ENCODE measurements at regions of chr14 and their contacts with region 1.

Region 1: DNA sequence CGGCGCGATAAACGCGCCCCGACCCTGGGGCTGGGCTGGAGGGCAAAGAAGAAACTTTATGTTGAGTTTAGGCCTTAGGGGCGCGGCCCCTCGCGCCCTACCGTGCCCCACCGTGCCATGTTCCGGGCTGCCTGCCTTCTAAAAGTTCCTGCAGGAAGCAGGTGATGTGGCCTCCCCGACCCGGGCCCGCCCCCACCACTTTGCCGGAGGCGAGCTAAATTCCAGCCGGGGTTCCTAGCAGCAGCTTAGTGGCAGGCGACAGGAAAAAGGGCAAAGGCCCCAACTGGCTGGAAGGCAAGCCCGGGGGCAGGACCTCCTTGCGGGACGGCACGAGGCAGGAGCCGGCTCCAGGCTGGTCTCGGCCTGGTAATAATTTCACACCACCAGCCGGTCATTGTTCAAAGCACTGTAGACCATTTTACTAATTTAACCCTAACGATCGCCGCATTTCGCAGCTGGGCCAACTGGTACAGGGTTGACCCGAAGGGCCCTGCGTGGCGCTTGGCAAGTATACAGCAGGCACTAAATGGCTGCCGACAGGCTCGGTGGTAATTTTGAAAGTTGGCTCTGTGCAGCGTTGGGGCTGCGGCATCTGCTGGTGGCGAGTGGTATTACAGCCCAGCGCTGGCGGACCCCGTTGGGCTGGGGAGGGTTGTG is 895 bp upstream of the CCDC88C start:
- DNase-seq: peak; percentile 41 to 75 (median 42)
- ATAC-seq: peak; percentile 67
- H3K4me3 ChIP-seq: peak overlapping the region; percentile 76
- H3K27ac ChIP-seq: peak overlapping the region; percentile 82
- H3K4me1 ChIP-seq: peaks cover 18 to 27% of the 10 kb centered on the region in 2 experiments; a peak in 4 of 5 replicates
- H3K27me3 ChIP-seq: no peaks in the 10 kb centered on the region
- CTCF ChIP-seq: peak; percentile 76 to 89 (median 82)
- EP300 ChIP-seq: no peak
- POLR2A ChIP-seq: no peak; the same call in 1 of the 2 replicates
- RAD21 ChIP-seq: peak; percentile 75 to 83

Region 2: GRCh38 chr14:91323671-91324605 is 94.6 kb before region 1 on chr14:
- CTCF ChIA-PET with region 1: interaction called, 8 read pairs
- POLR2A ChIA-PET with region 1: interaction called, 5 read pairs
- in situ Hi-C with region 1: loop called (anchors 10 kb)
- intact Hi-C with region 1: loop called (anchors 1 kb)
- DNase-seq: peak; percentile 58 to 71 (median 68)
- ATAC-seq: peak; percentile 81
- H3K4me3 ChIP-seq: no peak overlapping the region
- H3K27ac ChIP-seq: no peak overlapping the region
- H3K4me1 ChIP-seq: peaks cover 14 to 19% of the 10 kb centered on the region in 2 experiments; a peak in 4 of 5 replicates
- H3K27me3 ChIP-seq: no peaks in the 10 kb centered on the region
- CTCF ChIP-seq: peak; percentile 69 to 88 (median 80)
- EP300 ChIP-seq: no peak
- POLR2A ChIP-seq: no peak
- RAD21 ChIP-seq: peak; percentile 89

Region 3: DNA sequence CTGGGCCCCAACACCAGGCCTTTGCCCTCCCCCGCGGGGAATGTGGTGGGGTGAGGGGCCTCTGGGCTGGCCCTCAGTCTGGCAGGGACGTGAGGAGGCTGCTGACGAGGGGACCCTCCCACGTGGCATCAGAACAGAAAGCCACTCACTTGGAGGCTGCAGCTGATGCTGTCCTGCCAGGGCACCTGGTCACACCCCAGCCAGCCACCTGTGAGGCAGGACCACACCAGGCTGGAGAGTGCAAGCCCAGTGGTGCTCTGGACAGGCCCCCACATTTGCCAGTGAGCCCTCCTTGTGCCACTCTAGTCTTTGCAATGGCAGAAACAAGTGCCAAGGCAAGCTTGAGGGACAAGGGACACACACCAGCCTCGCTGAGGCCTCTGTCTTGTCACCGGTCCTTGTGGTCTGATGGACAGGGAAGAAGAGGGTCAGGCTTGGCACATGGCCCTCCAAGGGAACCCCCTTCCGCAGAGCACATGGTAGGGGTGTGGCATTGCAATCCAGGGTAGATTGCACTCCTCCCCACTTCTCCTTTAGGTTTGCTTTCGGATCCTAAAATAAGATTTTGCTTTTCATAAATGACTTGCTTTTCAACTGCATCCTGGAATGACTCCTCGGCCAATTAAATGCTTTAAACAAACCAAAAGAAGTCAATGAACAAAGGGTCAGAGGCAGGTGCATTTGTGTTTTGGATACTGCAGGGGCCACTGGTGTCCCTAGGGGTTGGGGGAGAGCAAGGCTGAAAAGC is 54.6 kb before region 1 on chr14:
- CTCF ChIA-PET with region 1: no interaction called
- POLR2A ChIA-PET with region 1: interaction called, 4 read pairs
- in situ Hi-C with region 1: no loop called
- intact Hi-C with region 1: loop called (anchors 5 kb)
- DNase-seq: peak in 1 of 4 experiments; percentile 16
- ATAC-seq: peak; percentile 53
- H3K4me3 ChIP-seq: no peak overlapping the region
- H3K27ac ChIP-seq: no peak overlapping the region
- H3K4me1 ChIP-seq: peaks cover 11 to 19% of the 10 kb centered on the region in 2 experiments; a peak in 4 of 5 replicates
- H3K27me3 ChIP-seq: no peaks in the 10 kb centered on the region
- CTCF ChIP-seq: no peak
- EP300 ChIP-seq: no peak
- POLR2A ChIP-seq: no peak
- RAD21 ChIP-seq: no peak

Region 4: GRCh38 chr14:91381801-91382670 is 36.5 kb before region 1 on chr14:
- CTCF ChIA-PET with region 1: no interaction called
- POLR2A ChIA-PET with region 1: no interaction called
- in situ Hi-C with region 1: no loop called
- intact Hi-C with region 1: loop called (anchors 1 kb)
- DNase-seq: peak; percentile 43 to 66 (median 55)
- ATAC-seq: peak; percentile 96
- H3K4me3 ChIP-seq: no peak overlapping the region
- H3K27ac ChIP-seq: peak overlapping the region; percentile 67; the same call in 2 of the 3 replicates
- H3K4me1 ChIP-seq: peaks cover 15 to 16% of the 10 kb centered on the region in 2 experiments
- H3K27me3 ChIP-seq: no peaks in the 10 kb centered on the region
- CTCF ChIP-seq: no peak
- EP300 ChIP-seq: no peak
- POLR2A ChIP-seq: no peak
- RAD21 ChIP-seq: no peak

Region 5: DNA sequence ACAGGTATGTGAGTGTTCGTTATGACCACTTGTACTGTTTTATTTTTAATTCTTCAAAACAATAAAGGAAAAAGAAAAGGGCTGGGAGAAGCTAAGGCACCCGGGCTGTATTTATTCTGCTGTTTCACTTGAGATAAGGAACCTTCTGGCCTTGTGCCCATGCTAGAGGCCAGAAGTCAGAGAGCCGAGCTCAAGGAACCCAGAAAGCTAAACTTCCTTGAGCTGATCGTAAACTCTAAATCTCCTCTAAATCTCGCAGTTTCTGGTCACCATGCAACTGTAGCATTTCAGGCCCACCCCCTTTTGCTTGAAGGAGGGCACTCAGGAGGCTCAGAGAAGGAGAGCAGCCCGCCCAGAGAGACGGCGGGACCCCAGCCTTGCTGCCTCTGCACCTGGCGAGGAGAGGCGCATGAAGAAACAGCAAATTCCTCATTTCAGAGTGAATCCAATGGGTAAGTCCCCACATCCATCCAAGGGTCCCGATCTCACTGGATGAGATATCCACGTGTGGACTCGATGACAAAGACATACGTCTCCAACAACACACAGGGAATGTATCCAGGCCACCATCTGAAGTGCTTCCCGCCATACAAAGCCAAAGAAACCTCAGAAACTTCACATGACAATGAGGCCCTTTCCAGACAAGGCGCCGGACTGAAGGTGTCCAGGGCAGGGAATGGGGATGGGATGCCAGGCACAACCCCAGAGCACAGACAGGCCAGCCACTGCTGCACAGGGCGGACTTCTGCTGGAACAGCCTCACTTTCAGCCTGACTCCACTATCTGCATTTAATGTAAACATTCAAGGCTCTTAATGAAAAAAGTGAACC is 15.5 kb before region 1 on chr14:
- CTCF ChIA-PET with region 1: interaction called, 4 read pairs
- POLR2A ChIA-PET with region 1: interaction called, 16 read pairs
- in situ Hi-C with region 1: no loop called
- intact Hi-C with region 1: no loop called
- DNase-seq: peak; percentile 59 to 89 (median 69)
- ATAC-seq: peak; percentile 88
- H3K4me3 ChIP-seq: peak overlapping the region; percentile 28
- H3K27ac ChIP-seq: peak overlapping the region; percentile 97
- H3K4me1 ChIP-seq: peaks cover 20 to 35% of the 10 kb centered on the region in 2 experiments; a peak in 4 of 5 replicates
- H3K27me3 ChIP-seq: no peaks in the 10 kb centered on the region
- CTCF ChIP-seq: no peak
- EP300 ChIP-seq: 0 out of 2 replicates have a peak, but pooled peaks have one; percentile 46
- POLR2A ChIP-seq: no peak
- RAD21 ChIP-seq: no peak

Region 6: DNA sequence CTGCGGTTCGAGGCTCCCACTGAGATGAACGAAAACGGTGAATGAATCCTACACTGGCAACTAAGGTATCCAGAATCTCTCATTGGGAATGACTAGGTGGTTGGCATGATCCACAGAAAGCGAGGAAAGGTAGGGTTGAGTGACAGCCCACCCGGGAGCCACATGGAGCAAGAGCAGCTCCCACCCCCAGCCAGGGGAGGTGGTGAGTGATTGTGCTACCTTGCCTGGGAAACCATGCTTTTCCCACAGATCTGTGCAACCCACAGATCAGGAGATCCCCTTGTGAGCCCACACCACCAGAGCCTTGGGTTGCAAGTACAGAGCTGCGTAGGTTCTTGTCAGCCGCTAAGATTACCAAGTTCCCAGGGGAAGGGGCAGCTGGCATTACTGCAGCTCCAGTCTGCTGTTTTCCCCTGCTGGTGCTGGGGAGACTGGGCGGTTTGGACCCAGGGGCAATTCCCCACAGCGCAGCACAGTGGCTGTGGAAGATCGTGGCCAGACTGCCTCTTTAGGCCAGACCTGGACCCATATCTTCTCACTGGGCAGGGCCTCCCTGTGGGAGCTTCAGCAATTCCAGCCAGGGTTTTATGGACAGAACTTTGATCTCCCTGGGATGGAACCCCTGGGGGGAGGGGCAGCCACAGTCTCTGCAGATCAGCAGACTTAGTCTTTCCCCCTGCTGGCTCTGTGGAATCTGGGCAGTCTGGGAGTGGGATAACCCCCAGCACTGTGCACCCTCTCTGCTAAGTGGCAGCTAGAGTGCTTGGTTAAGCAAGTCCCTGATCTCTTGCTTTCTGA is 136.2 kb after region 1 on chr14:
- CTCF ChIA-PET with region 1: no interaction called
- POLR2A ChIA-PET with region 1: no interaction called
- in situ Hi-C with region 1: no loop called
- intact Hi-C with region 1: no loop called
- DNase-seq: no peak
- ATAC-seq: no peak
- H3K4me3 ChIP-seq: no peak overlapping the region
- H3K27ac ChIP-seq: no peak overlapping the region
- H3K4me1 ChIP-seq: no peaks in the 10 kb centered on the region
- H3K27me3 ChIP-seq: no peaks in the 10 kb centered on the region
- CTCF ChIP-seq: no peak
- EP300 ChIP-seq: no peak
- POLR2A ChIP-seq: no peak
- RAD21 ChIP-seq: no peak

Measured in K562 (cell line).